Mammary epithelial cell (primary cell): ENCODE measurements at regions of chrX and their contacts with region 1.

Region 1: DNA sequence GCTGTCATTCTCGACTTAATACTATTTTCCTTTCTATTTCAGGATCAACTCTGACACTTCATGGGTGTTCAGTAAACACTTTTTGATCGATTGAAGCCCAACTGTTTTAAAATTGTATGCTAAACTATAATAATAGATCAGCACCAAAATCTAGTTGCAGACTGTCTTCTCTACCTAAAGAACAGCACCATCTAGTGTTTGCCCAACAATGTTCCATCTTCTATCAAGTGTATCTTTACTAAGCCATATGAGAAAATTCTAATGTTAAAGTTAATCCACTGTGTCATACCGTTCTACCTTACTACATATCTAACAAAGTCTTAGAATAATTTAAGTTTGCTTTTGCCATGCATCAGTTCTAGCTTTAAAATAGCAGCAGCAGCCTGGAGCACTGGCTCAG is 113.0 kb upstream of the PRDX4 start:
- DNase-seq: peak; percentile 20
- H3K4me3 ChIP-seq: no peak overlapping the region
- H3K27ac ChIP-seq: no peak overlapping the region
- H3K4me1 ChIP-seq: no peaks in the 10 kb centered on the region
- H3K27me3 ChIP-seq: peaks cover 4% of the 10 kb centered on the region
- CTCF ChIP-seq: peak; percentile 68 to 72

Region 2: GRCh38 chrX:23317799-23318724 is 236.2 kb before region 1 on chrX:
- CTCF ChIA-PET with region 1: no interaction called
- dilution Hi-C with region 1: no loop called
- in situ Hi-C with region 1: no loop called
- intact Hi-C with region 1: loop called (anchors 10 kb)
- DNase-seq: no peak
- H3K4me3 ChIP-seq: no peak overlapping the region
- H3K27ac ChIP-seq: no peak overlapping the region
- H3K4me1 ChIP-seq: no peaks in the 10 kb centered on the region
- H3K27me3 ChIP-seq: peaks cover 4% of the 10 kb centered on the region
- CTCF ChIP-seq: peak; percentile 92 to 94

Region 3: GRCh38 chrX:23403853-23404252 is 150.5 kb before region 1 on chrX:
- CTCF ChIA-PET with region 1: no interaction called
- dilution Hi-C with region 1: no loop called
- in situ Hi-C with region 1: no loop called
- intact Hi-C with region 1: loop called (anchors 2 kb)
- DNase-seq: no peak
- H3K4me3 ChIP-seq: no peak overlapping the region
- H3K27ac ChIP-seq: no peak overlapping the region
- H3K4me1 ChIP-seq: no peaks in the 10 kb centered on the region
- H3K27me3 ChIP-seq: peaks cover 5% of the 10 kb centered on the region
- CTCF ChIP-seq: peak; percentile 31 to 53

Region 4: DNA sequence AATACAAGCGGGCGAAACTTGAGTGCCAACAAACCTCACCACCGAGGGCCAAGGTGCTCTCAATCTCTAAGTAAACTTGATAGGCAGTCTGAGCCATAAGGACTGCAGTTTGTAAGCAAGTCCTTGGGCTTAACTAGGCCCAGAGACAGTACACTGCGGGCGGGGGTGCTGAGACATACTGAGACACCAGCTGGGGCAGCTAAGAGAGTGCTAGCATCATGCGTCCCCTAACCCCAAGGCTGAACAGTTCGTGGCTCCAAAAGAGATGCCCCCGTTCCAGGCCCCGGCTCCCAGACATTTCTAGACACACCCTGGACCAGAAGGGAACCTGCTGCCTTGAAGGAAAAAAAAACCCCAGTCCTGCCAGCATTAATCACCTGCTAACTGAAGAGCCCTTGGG is 13.8 kb before region 1 on chrX:
- CTCF ChIA-PET with region 1: no interaction called
- dilution Hi-C with region 1: no loop called
- in situ Hi-C with region 1: no loop called
- intact Hi-C with region 1: no loop called
- DNase-seq: no peak
- H3K4me3 ChIP-seq: no peak overlapping the region
- H3K27ac ChIP-seq: no peak overlapping the region
- H3K4me1 ChIP-seq: no peaks in the 10 kb centered on the region
- H3K27me3 ChIP-seq: no peaks in the 10 kb centered on the region
- CTCF ChIP-seq: no peak

Region 5: DNA sequence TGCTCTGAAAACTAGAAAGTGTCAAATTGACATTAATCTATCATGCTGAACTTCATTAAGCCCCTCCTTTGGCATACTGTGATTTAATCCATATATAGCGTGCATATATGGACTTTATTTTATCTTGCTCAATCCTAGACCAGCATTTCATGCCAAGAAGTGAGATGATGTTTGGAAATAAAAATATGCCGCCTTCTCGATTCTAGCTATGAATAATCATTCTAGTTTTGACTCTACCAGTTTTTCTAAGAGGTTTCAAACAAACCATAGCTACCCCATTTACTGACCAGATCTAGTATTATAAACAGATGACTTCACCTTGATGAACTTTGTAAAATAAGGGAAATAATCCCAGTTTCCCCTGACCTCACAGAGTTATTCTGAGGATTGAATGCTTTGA is 1366.5 kb after region 1 on chrX:
- CTCF ChIA-PET with region 1: no interaction called
- dilution Hi-C with region 1: no loop called
- in situ Hi-C with region 1: no loop called
- intact Hi-C with region 1: no loop called
- DNase-seq: no peak
- H3K4me3 ChIP-seq: no peak overlapping the region
- H3K27ac ChIP-seq: no peak overlapping the region
- H3K4me1 ChIP-seq: no peaks in the 10 kb centered on the region
- H3K27me3 ChIP-seq: no peaks in the 10 kb centered on the region
- CTCF ChIP-seq: no peak